Activated naive CD4-positive, alpha-beta T cell treated with anti-CD3 and anti-CD28 coated beads for 36 hours (primary cell): ENCODE measurements at regions of chr5 and their contacts with region 1.

Region 1: GRCh38 chr5:132753135-132753987 is 6.1 kb downstream of the CCNI2 start:
- DNase-seq: peak; percentile 52
- H3K4me3 Mint-ChIP-seq: no peak overlapping the region
- H3K27ac Mint-ChIP-seq: no peak overlapping the region
- H3K4me1 Mint-ChIP-seq: peaks cover 35% of the 10 kb centered on the region
- H3K27me3 Mint-ChIP-seq: no peaks in the 10 kb centered on the region

Region 2: DNA sequence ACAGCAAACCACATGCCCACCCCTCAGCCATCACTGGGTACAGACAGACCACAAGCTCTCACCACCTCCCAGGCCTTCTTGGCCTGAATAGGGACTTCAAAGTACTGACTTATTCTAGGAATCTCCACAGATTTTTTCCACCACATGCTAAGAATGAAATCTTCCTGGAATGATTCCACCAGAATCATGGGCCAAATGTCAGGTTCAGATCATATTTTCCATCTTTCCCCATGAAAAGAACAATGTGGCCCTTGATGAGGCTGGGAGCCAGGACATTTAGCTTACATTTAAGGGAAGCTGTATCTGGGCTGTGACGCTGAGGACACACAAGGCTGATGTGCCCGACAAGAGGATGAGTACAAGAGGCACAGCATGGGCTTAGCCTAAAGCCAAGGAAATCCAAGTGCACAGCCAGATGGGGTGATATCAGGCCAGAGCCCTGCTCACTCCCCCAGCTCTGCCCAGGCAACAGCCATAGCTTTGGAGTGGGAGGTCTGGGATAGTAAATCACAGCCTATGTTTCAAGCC is 770.1 kb before region 1 on chr5:
- CTCF ChIA-PET with region 1: no interaction called
- intact Hi-C with region 1: no loop called
- DNase-seq: no peak
- H3K4me3 Mint-ChIP-seq: no peak overlapping the region
- H3K27ac Mint-ChIP-seq: no peak overlapping the region
- H3K4me1 Mint-ChIP-seq: no peaks in the 10 kb centered on the region
- H3K27me3 Mint-ChIP-seq: no peaks in the 10 kb centered on the region

Region 3: GRCh38 chr5:132427281-132428146 is 325.8 kb before region 1 on chr5:
- CTCF ChIA-PET with region 1: no interaction called
- intact Hi-C with region 1: no loop called
- DNase-seq: peak; percentile 78
- H3K4me3 Mint-ChIP-seq: peak overlapping the region; percentile 53
- H3K27ac Mint-ChIP-seq: peak overlapping the region; percentile 95
- H3K4me1 Mint-ChIP-seq: peaks cover 95% of the 10 kb centered on the region
- H3K27me3 Mint-ChIP-seq: no peaks in the 10 kb centered on the region

Region 4: DNA sequence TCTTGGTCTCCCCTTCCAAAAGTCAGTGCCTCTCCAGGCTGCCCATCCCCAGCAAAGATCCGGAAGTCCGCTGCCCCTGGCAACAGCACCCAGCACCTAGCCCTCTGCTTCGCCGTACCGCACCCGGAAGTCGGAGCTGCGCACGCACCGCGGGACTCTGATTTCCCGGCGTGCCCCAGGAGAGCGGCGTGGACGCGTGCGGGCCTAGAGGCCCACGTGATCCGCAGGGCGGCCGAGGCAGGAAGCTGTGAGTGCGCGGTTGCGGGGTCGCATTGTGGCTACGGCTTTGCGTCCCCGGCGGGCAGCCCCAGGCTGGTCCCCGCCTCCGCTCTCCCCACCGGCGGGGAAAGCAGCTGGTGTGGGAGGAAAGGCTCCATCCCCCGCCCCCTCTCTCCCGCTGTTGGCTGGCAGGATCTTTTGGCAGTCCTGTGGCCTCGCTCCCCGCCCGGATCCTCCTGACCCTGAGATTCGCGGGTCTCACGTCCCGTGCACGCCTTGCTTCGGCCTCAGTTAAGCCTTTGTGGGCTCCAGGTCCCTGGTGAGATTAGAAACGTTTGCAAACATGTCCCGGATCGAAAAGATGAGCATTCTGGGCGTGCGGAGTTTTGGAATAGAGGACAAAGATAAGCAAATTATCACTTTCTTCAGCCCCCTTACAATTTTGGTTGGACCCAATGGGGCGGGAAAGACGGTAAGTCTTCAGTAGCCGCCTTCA is 196.4 kb before region 1 on chr5 and contains the start of gene RAD50:
- CTCF ChIA-PET with region 1: no interaction called
- intact Hi-C with region 1: loop called (anchors 1 kb)
- DNase-seq: peak; percentile 96
- H3K4me3 Mint-ChIP-seq: peak within 1 kb of the TSS; percentile 98
- H3K27ac Mint-ChIP-seq: peak within 1 kb of the TSS; percentile 94
- H3K4me1 Mint-ChIP-seq: peaks cover 15% of the 10 kb centered on the region
- H3K27me3 Mint-ChIP-seq: no peaks in the 10 kb centered on the region
- total RNA-seq, gene RAD50: 39.1 to 42.4 TPM

Region 5: GRCh38 chr5:132777209-132778069 is 24.1 kb after region 1 on chr5 and contains the start of gene SEPTIN8:
- CTCF ChIA-PET with region 1: interaction called, 3 read pairs
- intact Hi-C with region 1: loop called (anchors 2 kb)
- DNase-seq: peak; percentile 55
- H3K4me3 Mint-ChIP-seq: peak within 1 kb of the TSS; percentile 67
- H3K27ac Mint-ChIP-seq: no peak within 1 kb of the TSS
- H3K4me1 Mint-ChIP-seq: peaks cover 10% of the 10 kb centered on the region
- H3K27me3 Mint-ChIP-seq: peaks cover 26% of the 10 kb centered on the region
- total RNA-seq, gene SEPTIN8: 24.9 to 29.2 TPM